Transverse colon (tissue), 4 donors: ENCODE measurements at regions of chr7 and their contacts with region 1.

Region 1: DNA sequence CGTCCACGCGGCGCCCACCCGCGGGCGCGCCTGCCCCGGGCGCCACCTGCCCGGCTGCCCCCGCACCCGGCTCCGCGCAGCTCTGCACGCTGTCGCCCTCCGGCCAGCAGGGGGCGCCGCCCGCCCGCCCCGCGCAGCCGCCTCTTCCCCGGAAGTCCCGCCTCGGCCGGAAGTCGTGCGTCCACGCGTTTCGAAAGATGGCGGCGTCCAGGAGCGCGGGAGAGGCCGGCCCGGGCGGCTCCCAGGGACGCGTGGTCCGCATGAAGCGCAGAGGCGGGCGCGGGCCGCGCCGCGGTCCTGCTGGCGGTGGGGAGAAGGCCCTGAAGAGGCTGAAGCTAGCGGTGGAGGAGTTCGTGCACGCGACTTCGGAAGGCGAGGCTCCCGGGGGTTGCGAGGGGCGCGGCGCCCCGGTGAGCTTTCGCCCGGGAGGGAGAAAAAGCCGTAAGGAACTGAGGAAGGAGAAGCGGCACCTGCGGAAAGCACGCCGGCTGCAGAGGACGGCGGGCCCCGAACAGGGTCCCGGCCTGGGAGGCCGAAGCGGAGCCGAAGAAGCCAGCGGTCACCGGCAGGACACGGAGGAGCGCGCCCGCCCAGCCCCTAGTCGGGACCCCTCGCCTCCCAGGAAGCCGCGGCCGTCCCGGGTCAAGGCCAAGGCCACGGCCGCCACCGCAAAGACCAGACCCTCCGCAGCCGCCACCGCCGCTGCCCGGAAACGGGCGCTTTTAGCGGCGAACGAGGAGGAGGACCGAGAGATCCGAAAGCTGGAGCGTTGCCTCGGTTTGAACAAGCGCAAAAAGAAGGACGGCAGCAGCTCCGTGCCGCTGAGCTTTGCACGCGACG is at the start of gene NOM1:
- DNase-seq: peak; percentile 91
- H3K4me3 ChIP-seq: peak within 1 kb of the TSS; percentile 83 to 99 (median 96)
- H3K27ac ChIP-seq: peak within 1 kb of the TSS; percentile 62 to 88 (median 72)
- H3K4me1 ChIP-seq: peaks cover 12 to 31% (median 20%) of the 10 kb centered on the region in 4 donors
- H3K27me3 ChIP-seq: peaks cover 27% of the 10 kb centered on the region
- CTCF ChIP-seq: peak in 4 of 5 experiments; percentile 62 to 81 (median 74)
- EP300 ChIP-seq: no peak
- POLR2A ChIP-seq: peak; percentile 52
- total RNA-seq, gene NOM1: 6.6 to 22.4 (median 15.2) TPM

Region 2: DNA sequence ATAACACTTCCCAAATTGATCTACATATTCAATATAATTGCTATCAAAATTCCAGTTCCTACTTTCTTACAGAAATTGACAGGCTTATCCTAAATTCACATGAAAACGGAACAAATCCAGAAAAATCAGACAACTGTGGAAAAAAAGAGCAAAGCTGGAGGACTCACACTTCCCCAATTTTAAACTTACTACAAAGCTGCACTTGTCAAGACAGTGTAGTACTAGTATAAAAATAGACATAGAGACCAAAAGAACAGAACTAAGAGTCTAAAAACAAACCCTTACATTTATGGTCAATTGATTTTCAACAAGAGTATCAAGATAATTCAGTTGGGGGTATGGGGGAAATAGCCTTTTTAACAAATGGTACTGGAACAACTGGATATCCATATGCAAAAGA is 84.3 kb before region 1 on chr7:
- in situ Hi-C with region 1: no loop called
- intact Hi-C with region 1: no loop called
- DNase-seq: no peak
- H3K4me3 ChIP-seq: no peak overlapping the region
- H3K27ac ChIP-seq: no peak overlapping the region
- H3K4me1 ChIP-seq: no peaks in the 10 kb centered on the region
- H3K27me3 ChIP-seq: no peaks in the 10 kb centered on the region
- CTCF ChIP-seq: no peak
- EP300 ChIP-seq: no peak
- POLR2A ChIP-seq: no peak

Region 3: GRCh38 chr7:157138424-157139110 is 188.8 kb after region 1 on chr7 and contains the start of gene UBE3C:
- in situ Hi-C with region 1: loop called in 3 of 4 experiments (anchors 10 to 25 kb)
- intact Hi-C with region 1: no loop called
- DNase-seq: peak; percentile 92
- H3K4me3 ChIP-seq: peak within 1 kb of the TSS; percentile 66 to 89 (median 77)
- H3K27ac ChIP-seq: peak within 1 kb of the TSS; percentile 93 to 99 (median 96)
- H3K4me1 ChIP-seq: peaks cover 17 to 26% (median 18%) of the 10 kb centered on the region in 4 donors
- H3K27me3 ChIP-seq: no peaks in the 10 kb centered on the region
- CTCF ChIP-seq: no peak
- EP300 ChIP-seq: no peak
- POLR2A ChIP-seq: peak; percentile 55
- total RNA-seq, gene UBE3C: 47.9 to 91.8 (median 66.2) TPM

Region 4: DNA sequence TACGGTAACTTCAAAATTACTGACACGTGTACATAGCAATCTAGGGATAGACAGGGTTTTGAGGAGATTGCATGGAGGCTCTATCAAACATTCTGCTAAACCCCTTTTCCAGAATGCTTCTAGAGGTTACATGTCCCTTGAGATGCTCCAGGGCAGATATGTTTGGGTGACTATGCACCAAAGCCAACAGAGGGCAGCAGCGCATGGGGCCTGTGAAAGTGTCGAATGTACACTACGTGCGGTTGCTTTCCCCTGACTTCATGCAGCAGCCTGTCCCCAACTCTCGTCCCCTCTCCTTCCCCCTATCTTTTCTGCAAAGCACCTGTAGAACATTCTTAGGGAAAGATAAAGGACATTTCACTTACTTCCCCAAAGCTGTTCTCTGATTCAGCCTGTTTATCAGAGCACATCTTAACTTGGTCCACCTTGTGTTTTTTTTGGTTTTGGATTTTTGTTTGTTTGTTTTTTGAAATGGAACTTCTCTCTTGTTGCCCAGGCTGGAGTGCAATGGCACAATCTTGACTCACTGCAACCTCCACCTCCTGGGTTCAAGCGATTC is 279.2 kb after region 1 on chr7:
- in situ Hi-C with region 1: loop called in 1 of 4 experiments (anchors 25 kb)
- intact Hi-C with region 1: no loop called
- DNase-seq: no peak
- H3K4me3 ChIP-seq: no peak overlapping the region
- H3K27ac ChIP-seq: no peak overlapping the region
- H3K4me1 ChIP-seq: no peaks in the 10 kb centered on the region
- H3K27me3 ChIP-seq: no peaks in the 10 kb centered on the region
- CTCF ChIP-seq: no peak
- EP300 ChIP-seq: no peak
- POLR2A ChIP-seq: no peak

Region 5: GRCh38 chr7:157273208-157274093 is 323.7 kb after region 1 on chr7:
- in situ Hi-C with region 1: no loop called
- intact Hi-C with region 1: loop called (anchors 10 kb)
- DNase-seq: peak; percentile 69
- H3K4me3 ChIP-seq: no peak overlapping the region
- H3K27ac ChIP-seq: no peak overlapping the region
- H3K4me1 ChIP-seq: peaks cover 6 to 25% (median 13%) of the 10 kb centered on the region in 4 donors
- H3K27me3 ChIP-seq: no peaks in the 10 kb centered on the region
- CTCF ChIP-seq: peak; percentile 91 to 99 (median 97)
- EP300 ChIP-seq: no peak
- POLR2A ChIP-seq: no peak